ENCODE measurements at regions of chr7 and their contacts with region 1.

Region 1: GRCh38 chr7:23055582-23056178 is 41.8 kb upstream of the HYCC1 start:
- DNase-seq: peak; percentile 83
- H3K4me3 ChIP-seq: no peak overlapping the region
- H3K27ac ChIP-seq: no peak overlapping the region
- H3K4me1 ChIP-seq: peaks cover 5% of the 10 kb centered on the region
- CTCF ChIP-seq: peak; percentile 100

Region 2: DNA sequence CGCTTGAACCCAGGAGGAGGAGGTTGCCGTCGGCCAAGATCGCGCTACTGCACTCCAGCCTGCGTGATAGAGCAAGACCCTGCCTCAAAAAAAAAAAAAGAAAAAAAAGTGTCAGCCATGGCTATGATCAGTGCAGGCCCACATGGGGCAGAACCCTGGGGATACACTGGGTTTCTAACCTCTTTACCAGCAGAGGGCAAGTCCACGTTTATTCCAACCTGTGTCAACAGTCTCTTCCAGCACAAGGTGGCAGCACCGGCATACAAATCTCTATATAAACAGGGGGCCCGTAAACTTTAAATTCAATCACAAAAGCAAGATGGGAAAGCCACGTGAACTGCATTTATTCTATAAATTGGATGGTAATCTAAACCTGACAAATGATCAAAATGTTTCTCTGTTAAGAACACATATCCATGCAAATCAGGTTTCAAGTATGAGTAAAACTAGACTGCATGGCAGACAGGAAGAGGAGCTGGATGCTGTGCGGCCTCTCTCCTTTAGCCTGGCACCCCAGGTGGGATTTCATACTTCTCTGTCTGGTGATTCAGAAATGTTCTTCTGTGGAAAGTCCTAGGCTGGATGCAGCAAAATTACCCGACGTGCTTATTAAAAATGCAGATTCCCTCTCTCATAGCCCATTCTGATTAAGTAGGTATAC is 495.7 kb before region 1 on chr7:
- CTCF ChIA-PET with region 1: interaction called, 3 read pairs
- POLR2A ChIA-PET with region 1: no interaction called
- intact Hi-C with region 1: loop called (anchors 1 kb)
- DNase-seq: peak; percentile 84
- H3K4me3 ChIP-seq: no peak overlapping the region
- H3K27ac ChIP-seq: no peak overlapping the region
- H3K4me1 ChIP-seq: peaks cover 21% of the 10 kb centered on the region
- CTCF ChIP-seq: peak; percentile 100

Region 3: GRCh38 chr7:22782616-22783232 is 273.0 kb before region 1 on chr7:
- CTCF ChIA-PET with region 1: no interaction called
- POLR2A ChIA-PET with region 1: interaction called, 3 read pairs
- intact Hi-C with region 1: loop called (anchors 5 kb)
- DNase-seq: peak; percentile 75
- H3K4me3 ChIP-seq: no peak overlapping the region
- H3K27ac ChIP-seq: no peak overlapping the region
- H3K4me1 ChIP-seq: no peaks in the 10 kb centered on the region
- CTCF ChIP-seq: peak; percentile 97

Region 4: DNA sequence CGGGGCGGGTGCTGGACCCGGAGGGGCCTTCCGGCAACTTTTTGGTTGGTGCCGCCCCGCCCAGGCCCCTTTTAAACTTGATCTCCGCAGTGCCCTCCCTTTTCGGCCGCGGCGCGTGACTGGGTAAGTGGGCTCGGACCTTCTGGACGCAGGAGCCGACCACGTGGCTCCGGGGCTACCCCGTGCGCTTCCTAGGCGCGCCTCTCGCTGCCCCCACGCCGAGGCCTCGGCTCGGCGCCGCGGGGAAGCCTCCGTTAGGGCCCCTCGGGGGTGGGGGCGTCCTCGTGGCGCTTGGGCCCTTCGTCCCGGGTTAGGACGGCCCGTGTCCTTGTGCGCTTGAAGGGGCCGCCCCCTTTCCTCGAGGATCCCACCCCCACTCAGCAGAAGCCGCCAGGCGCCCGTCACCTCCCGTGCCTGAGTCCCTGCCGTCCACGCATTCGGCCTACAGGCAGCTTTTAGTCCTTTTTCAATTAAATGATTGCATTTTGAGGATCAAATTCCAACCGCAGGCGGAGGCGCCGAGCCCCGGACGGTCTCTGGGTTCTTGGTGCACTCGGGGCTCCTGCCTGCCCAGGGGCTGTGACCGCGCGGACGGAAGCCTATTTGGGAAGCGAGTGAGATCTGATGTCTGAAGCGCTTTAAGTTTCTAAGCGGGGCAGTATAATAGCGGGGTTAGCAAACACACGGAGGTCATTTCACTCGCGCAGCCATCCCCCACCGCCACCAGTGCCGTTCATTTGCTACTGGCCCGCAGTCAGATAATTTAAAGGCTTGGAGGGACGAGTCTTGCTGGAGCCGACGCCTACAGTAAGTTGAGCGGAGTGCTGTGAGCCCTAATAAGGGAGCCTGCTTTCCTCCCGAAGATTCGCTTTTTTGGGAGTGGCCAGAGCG is 201.3 kb before region 1 on chr7:
- CTCF ChIA-PET with region 1: interaction called, 4 read pairs
- POLR2A ChIA-PET with region 1: interaction called, 3 read pairs
- intact Hi-C with region 1: loop called (anchors 1 kb)
- DNase-seq: peak; percentile 89
- H3K4me3 ChIP-seq: peak overlapping the region; percentile 81
- H3K27ac ChIP-seq: peak overlapping the region; percentile 62
- H3K4me1 ChIP-seq: peaks cover 42% of the 10 kb centered on the region
- CTCF ChIP-seq: peak; percentile 58; the same call in 1 of the 2 replicates

Region 5: GRCh38 chr7:23013715-23014649 is 41.7 kb before region 1 on chr7 and contains the start of gene HYCC1:
- CTCF ChIA-PET with region 1: no interaction called
- POLR2A ChIA-PET with region 1: interaction called, 12 read pairs
- intact Hi-C with region 1: loop called (anchors 2 kb)
- DNase-seq: peak; percentile 99
- H3K4me3 ChIP-seq: peak within 1 kb of the TSS; percentile 98
- H3K27ac ChIP-seq: peak within 1 kb of the TSS; percentile 84
- H3K4me1 ChIP-seq: peaks cover 75% of the 10 kb centered on the region
- CTCF ChIP-seq: peak; percentile 79
- total RNA-seq, gene HYCC1: 43.3 and 69.9 TPM in 2 replicates